ENCODE measurements at regions of chr6 and their contacts with region 1.

Region 1: GRCh38 chr6:134097114-134097707 is 44.8 kb upstream of the SLC2A12 start:
- DNase-seq: no peak
- H3K4me3 ChIP-seq: no peak overlapping the region
- CTCF ChIP-seq: peak; percentile 30

Region 2: GRCh38 chr6:133906050-133906449 is 191.2 kb before region 1 on chr6:
- CTCF ChIA-PET with region 1: interaction called, 13 read pairs
- POLR2A ChIA-PET with region 1: no interaction called
- DNase-seq: no peak
- H3K4me3 ChIP-seq: no peak overlapping the region
- CTCF ChIP-seq: no peak

Region 3: GRCh38 chr6:133939778-133940667 is 157.2 kb before region 1 on chr6:
- CTCF ChIA-PET with region 1: interaction called, 38 read pairs
- POLR2A ChIA-PET with region 1: interaction called, 8 read pairs
- DNase-seq: no peak
- H3K4me3 ChIP-seq: no peak overlapping the region
- CTCF ChIP-seq: no peak

Region 4: GRCh38 chr6:133959667-133960368 is 137.4 kb before region 1 on chr6:
- CTCF ChIA-PET with region 1: interaction called, 20 read pairs
- POLR2A ChIA-PET with region 1: no interaction called
- DNase-seq: no peak
- H3K4me3 ChIP-seq: no peak overlapping the region
- CTCF ChIP-seq: no peak

Region 5: DNA sequence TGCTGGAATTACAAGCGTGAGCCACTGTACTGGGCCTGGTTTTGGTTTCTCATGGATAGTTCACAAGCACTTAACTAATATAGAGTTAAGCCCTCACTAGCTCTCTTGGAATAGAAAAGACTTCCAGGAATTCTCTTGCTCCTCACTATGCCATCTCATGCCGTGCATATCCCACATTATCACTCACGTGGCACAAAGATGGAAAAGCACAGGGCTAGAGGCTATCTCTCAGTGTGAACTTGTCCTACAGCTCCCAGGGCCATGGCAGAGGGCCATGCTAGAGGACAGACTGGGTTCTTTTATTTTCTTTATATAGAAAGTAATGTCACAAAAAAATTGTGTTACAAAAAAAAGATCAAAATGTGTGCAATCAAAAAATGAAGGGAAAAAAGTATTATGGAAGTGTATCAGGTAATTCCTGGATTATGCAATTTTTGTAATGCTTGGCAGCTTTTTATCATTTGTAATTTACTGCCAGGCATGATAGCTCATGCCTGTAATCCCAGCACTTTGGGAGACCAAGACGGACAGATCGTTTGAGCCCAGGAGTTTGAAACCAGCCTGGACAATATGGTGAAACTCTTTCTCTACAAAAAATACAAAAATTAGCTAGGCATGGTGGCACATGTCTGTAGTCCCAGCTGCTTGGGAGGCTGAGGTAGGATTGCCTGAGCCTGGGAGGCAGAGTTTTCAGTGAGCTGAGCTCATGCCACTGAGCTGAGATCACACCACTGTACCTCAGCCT is 38.4 kb before region 1 on chr6:
- CTCF ChIA-PET with region 1: interaction called, 100 read pairs
- POLR2A ChIA-PET with region 1: no interaction called
- DNase-seq: no peak
- H3K4me3 ChIP-seq: no peak overlapping the region
- CTCF ChIP-seq: no peak

Region 6: GRCh38 chr6:134080171-134080795 is 16.9 kb before region 1 on chr6:
- CTCF ChIA-PET with region 1: interaction called, 57 read pairs
- POLR2A ChIA-PET with region 1: no interaction called
- DNase-seq: no peak
- H3K4me3 ChIP-seq: no peak overlapping the region
- CTCF ChIP-seq: no peak

Region 7: DNA sequence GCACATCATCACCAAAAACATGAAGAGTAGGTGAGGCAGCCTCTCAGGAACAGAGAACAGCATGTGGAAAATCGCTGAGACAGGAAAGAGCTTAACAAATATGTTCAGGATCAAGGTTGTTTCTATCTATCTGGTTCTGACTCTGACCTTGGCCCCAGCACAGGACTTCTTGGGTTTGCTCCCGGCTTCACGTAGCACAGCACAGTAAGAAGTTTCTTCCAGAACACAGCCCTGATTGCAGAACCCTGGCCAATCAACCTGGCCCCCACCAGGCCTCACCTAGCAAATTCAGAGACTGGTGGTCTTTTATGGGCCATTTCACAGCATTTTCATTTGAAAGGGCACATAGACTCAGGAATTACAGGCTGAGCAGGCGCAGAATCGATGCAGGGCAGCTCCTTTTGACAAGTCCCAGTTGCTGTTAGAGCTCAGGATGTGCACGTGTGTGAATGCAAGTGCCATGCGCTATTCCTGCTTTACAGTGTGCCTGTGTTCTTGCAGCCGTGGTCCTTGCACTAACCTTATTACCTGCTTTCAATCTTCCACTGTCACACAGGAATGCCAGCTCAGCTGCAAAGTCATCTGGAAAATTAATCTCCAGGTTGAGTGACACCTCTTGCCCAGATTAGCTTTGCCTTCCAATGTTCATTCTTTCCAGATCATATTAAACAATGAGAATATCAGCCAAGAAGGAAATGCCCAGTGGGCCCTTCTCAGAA is 55.7 kb after region 1 on chr6:
- CTCF ChIA-PET with region 1: no interaction called
- POLR2A ChIA-PET with region 1: no interaction called
- DNase-seq: no peak
- H3K4me3 ChIP-seq: no peak overlapping the region
- CTCF ChIP-seq: no peak

Region 8: GRCh38 chr6:134253681-134254080 is 156.5 kb after region 1 on chr6:
- CTCF ChIA-PET with region 1: no interaction called
- POLR2A ChIA-PET with region 1: no interaction called
- DNase-seq: peak; percentile 51
- H3K4me3 ChIP-seq: no peak overlapping the region
- CTCF ChIP-seq: no peak

Region 9: GRCh38 chr6:134938896-134939295 is 841.7 kb after region 1 on chr6:
- CTCF ChIA-PET with region 1: interaction called, 17 read pairs
- POLR2A ChIA-PET with region 1: no interaction called
- DNase-seq: no peak
- H3K4me3 ChIP-seq: no peak overlapping the region
- CTCF ChIP-seq: no peak